ENCODE measurements at regions of chr16 and their contacts with region 1.

Region 1: DNA sequence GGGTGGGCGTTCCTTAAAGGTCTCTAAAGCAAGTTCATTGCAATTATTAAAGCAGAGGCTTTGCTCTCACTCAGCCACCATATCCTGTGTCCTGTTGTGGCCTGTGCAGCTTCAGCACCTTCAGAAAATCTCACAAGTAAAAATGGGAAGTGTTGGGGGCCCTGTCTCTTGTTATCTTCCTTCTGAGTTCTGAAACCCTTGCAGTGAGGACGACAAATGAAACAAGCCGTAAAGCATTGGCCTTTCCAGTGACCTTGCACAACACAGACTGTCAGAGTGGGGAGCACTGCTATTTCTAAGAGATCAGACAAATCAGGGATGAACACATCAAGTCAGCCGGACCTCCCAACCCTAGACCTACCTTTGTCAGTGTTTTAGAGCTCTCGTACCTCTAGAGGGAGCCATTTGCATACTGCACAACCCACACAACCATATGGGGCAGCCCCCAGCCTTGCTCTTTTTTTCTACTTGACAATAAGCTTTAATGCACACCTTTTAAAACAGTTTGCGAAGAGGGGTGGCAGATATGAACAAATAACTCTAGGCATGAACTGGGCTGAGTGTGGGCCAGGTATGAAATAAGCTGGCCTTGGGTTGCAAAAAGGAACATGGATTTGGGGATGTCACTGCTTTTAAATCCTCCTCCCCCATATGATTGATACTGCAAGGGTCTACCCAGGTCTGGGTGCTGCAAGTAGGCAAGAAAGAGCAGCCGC is 89.8 kb downstream of the KATNIP start:
- DNase-seq: no peak
- H3K4me3 ChIP-seq: no peak overlapping the region
- H3K27me3 ChIP-seq: no peaks in the 10 kb centered on the region
- CTCF ChIP-seq: peak; percentile 81

Region 2: GRCh38 chr16:27549859-27550581 is 89.7 kb before region 1 on chr16 and contains the starts of genes GTF3C1 and KATNIP:
- CTCF ChIA-PET with region 1: no interaction called
- POLR2A ChIA-PET with region 1: no interaction called
- DNase-seq: peak; percentile 88
- H3K4me3 ChIP-seq: peak within 1 kb of the TSS; percentile 82
- H3K27me3 ChIP-seq: no peaks in the 10 kb centered on the region
- CTCF ChIP-seq: no peak
- polyA plus RNA-seq, gene GTF3C1: 22.8 and 35.8 TPM in 2 replicates
- polyA plus RNA-seq, gene KATNIP: 16.9 and 18.8 TPM in 2 replicates

Region 3: GRCh38 chr16:27628241-27628942 is 11.3 kb before region 1 on chr16:
- CTCF ChIA-PET with region 1: interaction called, 13 read pairs
- POLR2A ChIA-PET with region 1: no interaction called
- DNase-seq: no peak
- H3K4me3 ChIP-seq: no peak overlapping the region
- H3K27me3 ChIP-seq: no peaks in the 10 kb centered on the region
- CTCF ChIP-seq: no peak

Region 4: DNA sequence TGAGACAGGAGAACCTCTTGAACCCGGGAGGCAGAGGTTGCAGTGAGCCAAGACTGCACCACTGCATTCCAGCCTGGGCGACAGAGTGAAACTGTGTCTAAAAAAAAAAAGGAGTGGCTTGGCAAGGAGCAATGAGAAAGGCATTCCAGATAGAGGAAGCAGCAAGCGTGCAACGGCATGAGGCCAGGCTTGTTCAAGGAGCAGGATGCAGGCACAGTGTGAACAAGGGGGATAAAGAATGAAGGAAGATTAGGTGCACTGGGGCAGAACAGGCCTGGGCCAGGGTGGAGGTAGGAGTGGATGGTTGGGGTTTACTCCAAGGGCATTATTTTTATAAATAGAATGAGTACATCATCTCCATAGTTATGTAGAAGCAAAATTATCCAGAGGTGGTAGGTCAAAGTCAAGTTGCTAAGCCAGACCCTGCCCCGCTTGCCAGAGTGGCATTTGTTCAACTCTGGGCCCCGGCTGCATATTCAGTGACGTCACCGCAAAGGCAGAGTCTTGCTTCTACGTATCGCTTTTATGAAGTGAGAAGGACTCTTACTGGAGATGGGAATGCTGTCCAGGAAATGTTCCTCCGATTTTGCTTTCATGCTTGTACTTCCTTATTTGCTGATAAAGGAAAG is 10.5 kb after region 1 on chr16:
- CTCF ChIA-PET with region 1: interaction called, 12 read pairs
- POLR2A ChIA-PET with region 1: no interaction called
- DNase-seq: no peak
- H3K4me3 ChIP-seq: no peak overlapping the region
- H3K27me3 ChIP-seq: no peaks in the 10 kb centered on the region
- CTCF ChIP-seq: no peak

Region 5: GRCh38 chr16:27790546-27791403 is 151.1 kb after region 1 on chr16:
- CTCF ChIA-PET with region 1: no interaction called
- POLR2A ChIA-PET with region 1: no interaction called
- DNase-seq: no peak
- H3K4me3 ChIP-seq: no peak overlapping the region
- H3K27me3 ChIP-seq: no peaks in the 10 kb centered on the region
- CTCF ChIP-seq: no peak

Measured in BJ (cell line).